A549 (cell line): ENCODE measurements at regions of chr15 and their contacts with region 1.

Region 1: DNA sequence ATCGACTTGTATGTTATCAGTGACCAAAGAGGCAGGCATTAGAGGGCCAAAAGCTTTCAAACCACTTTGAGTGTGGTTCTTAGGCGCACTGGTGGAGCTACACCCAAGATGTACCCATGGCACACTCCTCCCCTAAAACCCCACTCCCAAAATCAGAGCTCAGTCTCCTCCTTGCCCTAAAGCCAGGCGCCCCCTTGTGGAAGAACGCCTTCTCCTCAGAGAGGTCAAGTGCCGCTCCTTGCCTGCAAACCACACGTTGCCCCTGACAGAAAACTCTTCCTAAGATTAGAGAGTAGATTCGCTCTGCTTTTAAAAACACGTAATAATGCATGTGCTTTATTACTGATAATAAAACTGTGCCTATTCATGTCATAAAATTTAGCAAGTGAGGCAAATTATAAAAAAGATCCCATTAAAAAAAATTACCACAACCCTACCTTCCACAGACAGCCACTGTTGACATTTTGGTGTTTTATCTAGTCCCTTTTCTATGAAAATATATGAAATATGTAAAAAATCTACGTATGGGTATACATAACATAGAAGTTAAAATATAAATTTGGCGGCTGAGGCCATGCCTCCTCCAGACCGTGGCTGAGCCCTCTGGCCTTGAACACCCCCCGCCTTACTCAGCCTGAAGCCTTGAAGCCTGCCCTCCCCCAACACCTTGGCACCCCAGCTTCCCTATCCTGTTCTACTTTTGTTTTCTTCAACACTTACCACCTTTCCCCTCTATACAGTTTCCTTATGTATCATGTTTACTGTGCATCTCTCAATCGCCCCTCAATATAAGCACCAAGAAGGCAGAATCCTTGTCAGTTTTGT is 33.5 kb downstream of the BCL2L10 start:
- DNase-seq: peak; percentile 79 to 82
- ATAC-seq: peak; percentile 55 to 87; a peak in 4 of 6 replicates
- H3K4me3 ChIP-seq: no peak overlapping the region
- H3K27ac ChIP-seq: peak overlapping the region; percentile 69 to 82
- H3K4me1 ChIP-seq: peaks cover 34% of the 10 kb centered on the region
- CTCF ChIP-seq: peak; percentile 93
- EP300 ChIP-seq: no peak
- POLR2A ChIP-seq: no peak
- RAD21 ChIP-seq: peak; percentile 81 to 88

Region 2: DNA sequence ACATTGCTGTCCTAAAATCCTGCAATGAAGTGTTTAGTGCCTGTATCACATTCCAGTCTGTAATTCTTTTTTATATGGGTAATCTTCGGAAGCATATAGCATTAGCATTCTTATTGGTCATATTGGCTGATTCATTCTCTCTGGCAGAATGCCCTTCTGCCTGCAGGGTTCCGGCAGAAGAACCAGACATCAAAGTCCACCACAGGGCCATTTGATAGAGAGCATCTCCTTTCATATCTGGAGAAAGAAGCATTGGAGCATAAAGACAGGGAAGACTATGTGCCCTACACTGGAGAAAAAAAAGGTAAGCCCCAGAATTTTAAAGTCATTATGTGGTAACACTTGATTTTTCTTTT is 210.0 kb before region 1 on chr15:
- CTCF ChIA-PET with region 1: no interaction called
- POLR2A ChIA-PET with region 1: no interaction called
- DNase-seq: peak; percentile 70 to 95
- ATAC-seq: peak; percentile 78 to 87
- H3K4me3 ChIP-seq: peak overlapping the region; percentile 32
- H3K27ac ChIP-seq: peak overlapping the region; percentile 89
- H3K4me1 ChIP-seq: peaks cover 76% of the 10 kb centered on the region
- CTCF ChIP-seq: no peak
- EP300 ChIP-seq: peak; percentile 59 to 82; a peak in 3 of 5 replicates
- POLR2A ChIP-seq: no peak
- RAD21 ChIP-seq: peak in 1 of 2 experiments; percentile 25; a peak in 2 of 5 replicates

Region 3: GRCh38 chr15:51971375-51972133 is 107.5 kb before region 1 on chr15 and contains the start of gene LEO1:
- CTCF ChIA-PET with region 1: interaction called, 26 read pairs
- POLR2A ChIA-PET with region 1: interaction called, 6 read pairs
- DNase-seq: peak; percentile 99
- ATAC-seq: peak; percentile 94 to 98
- H3K4me3 ChIP-seq: peak within 1 kb of the TSS; percentile 68
- H3K27ac ChIP-seq: peak within 1 kb of the TSS; percentile 83 to 95
- H3K4me1 ChIP-seq: peaks cover 13% of the 10 kb centered on the region
- CTCF ChIP-seq: peak; percentile 51
- EP300 ChIP-seq: no peak
- POLR2A ChIP-seq: peak; percentile 93
- RAD21 ChIP-seq: peak in 1 of 2 experiments; percentile 32; a peak in 1 of 5 replicates
- polyA plus RNA-seq, gene LEO1: 19.2 and 22.3 TPM in 2 replicates

Region 4: DNA sequence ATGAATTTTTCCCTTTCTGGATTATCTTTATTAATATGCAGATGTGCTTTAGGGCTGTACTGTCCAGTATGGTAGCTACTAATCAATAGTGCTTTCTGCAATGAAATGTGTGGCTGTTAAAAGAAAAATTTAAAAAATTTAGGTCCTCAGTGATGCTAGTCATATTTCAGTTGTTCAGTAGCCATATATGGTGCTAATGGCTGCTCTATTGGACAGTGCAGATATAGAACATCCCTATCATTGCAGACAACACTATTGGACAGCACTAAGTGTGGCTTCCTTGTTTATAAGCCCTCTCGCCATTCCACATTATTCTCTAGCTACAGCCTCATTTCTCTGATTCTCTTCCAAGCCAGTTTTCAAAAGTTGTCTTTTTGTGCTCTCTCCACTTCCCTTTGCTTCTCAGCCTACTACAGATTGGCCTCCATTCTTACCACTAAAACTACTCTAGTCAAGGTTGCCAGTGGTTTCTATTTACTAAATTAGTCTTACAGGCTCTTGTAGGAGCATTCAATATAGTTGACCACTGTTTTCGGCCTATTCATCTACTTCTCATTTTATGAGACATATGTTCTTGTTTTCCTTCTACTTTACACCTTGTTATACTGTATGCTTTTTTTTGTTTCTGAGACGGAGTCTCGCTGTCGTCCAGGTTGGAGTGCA is 50.5 kb before region 1 on chr15:
- CTCF ChIA-PET with region 1: interaction called, 12 read pairs
- POLR2A ChIA-PET with region 1: no interaction called
- DNase-seq: no peak
- ATAC-seq: peak in 1 of 2 experiments; percentile 25; a peak in 2 of 6 replicates
- H3K4me3 ChIP-seq: no peak overlapping the region
- H3K27ac ChIP-seq: no peak overlapping the region
- H3K4me1 ChIP-seq: peaks cover 34% of the 10 kb centered on the region
- CTCF ChIP-seq: no peak
- EP300 ChIP-seq: no peak
- POLR2A ChIP-seq: no peak
- RAD21 ChIP-seq: no peak

Region 5: DNA sequence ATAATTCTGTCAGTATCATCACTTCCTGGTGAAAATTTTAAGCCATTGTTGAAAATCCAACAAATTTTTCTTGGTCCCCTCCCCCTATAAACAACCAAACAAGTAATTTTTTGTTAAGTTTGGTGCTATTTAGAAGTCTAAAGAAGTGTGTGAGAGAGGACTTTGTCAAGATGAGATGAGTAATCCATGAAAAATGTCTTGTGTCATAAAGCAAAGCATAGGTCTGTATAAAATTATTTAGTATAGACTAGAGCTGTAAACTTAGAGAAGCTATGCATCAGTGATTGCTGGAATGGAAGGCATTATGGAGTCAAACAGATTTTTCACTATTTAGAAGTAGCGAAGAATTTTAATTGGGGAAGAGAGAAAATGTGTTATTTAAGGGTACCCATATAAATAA is 28.7 kb before region 1 on chr15:
- CTCF ChIA-PET with region 1: interaction called, 17 read pairs
- POLR2A ChIA-PET with region 1: no interaction called
- DNase-seq: peak in 1 of 2 experiments; percentile 23
- ATAC-seq: peak; percentile 46 to 58; a peak in 3 of 6 replicates
- H3K4me3 ChIP-seq: no peak overlapping the region
- H3K27ac ChIP-seq: no peak overlapping the region
- H3K4me1 ChIP-seq: peaks cover 32% of the 10 kb centered on the region
- CTCF ChIP-seq: no peak
- EP300 ChIP-seq: no peak
- POLR2A ChIP-seq: no peak
- RAD21 ChIP-seq: no peak

Region 6: DNA sequence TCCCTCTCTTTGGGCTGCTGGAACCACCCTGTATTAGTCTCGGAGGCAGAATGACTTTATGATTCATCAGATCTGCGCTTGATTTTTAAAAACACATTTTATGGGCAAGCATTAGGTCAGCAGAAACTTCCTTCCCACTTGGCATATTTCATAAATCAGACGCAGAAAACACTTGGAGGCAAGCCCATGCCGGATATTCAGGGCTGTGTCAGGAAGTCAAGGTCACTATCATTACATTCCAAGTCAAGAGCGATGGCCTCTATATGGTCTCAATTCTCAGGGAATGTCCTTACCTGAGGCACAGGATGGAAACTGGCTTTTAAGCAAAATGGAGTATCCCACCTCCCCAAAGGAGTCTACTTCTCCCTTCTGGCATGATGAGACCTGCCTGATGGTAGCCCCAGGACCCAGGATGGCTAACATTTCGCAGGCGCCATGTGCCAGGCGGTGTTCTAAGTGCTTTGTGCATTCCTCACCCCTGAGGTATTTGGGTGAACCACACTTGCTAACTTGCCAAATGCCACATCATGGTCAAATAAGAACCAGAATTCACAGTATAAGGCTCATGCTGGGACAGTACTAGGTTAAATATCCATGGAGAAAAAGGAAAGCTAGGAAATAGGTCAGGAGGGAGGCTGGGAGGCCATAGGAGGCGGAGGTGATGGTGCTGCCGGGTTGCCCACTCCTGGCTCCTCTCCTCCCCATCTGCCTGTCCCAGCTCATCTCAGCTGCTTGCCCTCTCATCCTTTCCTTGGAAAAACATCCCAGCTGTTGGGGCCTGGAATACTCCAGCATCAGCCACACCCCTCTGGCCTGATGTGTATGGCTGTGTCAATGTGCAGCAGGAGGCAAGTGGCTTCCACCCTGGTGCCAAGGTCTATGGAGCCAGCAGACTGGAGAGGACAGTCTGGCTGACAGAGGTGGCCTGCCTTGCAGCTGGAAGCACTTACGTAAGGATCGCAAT is 14.7 kb after region 1 on chr15:
- CTCF ChIA-PET with region 1: interaction called, 39 read pairs
- POLR2A ChIA-PET with region 1: no interaction called
- DNase-seq: peak; percentile 46 to 86
- ATAC-seq: peak; percentile 81 to 84
- H3K4me3 ChIP-seq: no peak overlapping the region
- H3K27ac ChIP-seq: peak overlapping the region; percentile 83 to 91
- H3K4me1 ChIP-seq: peaks cover 43% of the 10 kb centered on the region
- CTCF ChIP-seq: no peak
- EP300 ChIP-seq: peak; percentile 63 to 79; a peak in 2 of 5 replicates
- POLR2A ChIP-seq: no peak
- RAD21 ChIP-seq: peak in 1 of 2 experiments; percentile 19; a peak in 3 of 5 replicates

Region 7: GRCh38 chr15:52139599-52140491 is 60.8 kb after region 1 on chr15:
- CTCF ChIA-PET with region 1: interaction called, 55 read pairs
- POLR2A ChIA-PET with region 1: no interaction called
- DNase-seq: peak; percentile 79 to 92
- ATAC-seq: peak; percentile 66 to 87
- H3K4me3 ChIP-seq: no peak overlapping the region
- H3K27ac ChIP-seq: peak overlapping the region; percentile 67 to 83
- H3K4me1 ChIP-seq: peaks cover 50% of the 10 kb centered on the region
- CTCF ChIP-seq: peak; percentile 97
- EP300 ChIP-seq: no peak
- POLR2A ChIP-seq: no peak
- RAD21 ChIP-seq: peak; percentile 91 to 92

Region 8: DNA sequence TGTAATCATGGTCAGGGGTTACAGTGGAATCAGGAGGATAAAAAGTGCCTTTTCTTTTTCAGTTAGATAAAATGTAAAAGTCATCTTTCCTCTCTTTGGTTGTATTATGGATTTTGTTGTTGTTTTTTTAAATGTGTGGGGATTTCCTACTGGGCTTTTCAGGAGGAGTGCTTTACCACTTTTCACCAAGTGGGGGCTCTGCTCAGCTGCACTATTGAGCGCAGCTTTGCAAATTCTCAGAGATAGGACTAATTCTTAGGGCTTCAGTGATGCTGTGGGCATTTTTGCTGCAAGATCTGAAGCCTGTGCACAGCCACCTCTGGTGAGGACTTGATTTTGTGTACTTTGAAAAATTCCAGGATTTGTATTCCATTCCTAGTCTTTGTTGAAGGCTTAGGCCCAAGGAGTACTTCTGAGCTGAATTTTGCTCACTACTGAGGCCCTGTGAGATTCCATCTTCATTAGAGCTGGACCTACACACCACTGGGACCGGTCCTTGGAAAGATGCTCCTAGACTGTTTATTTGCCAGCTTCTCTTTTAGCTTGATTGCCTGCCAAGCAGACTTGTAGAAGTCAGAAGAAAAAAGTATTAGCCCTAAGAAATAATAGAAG is 104.6 kb after region 1 on chr15:
- CTCF ChIA-PET with region 1: no interaction called
- POLR2A ChIA-PET with region 1: no interaction called
- DNase-seq: peak; percentile 43 to 47
- ATAC-seq: no peak
- H3K4me3 ChIP-seq: no peak overlapping the region
- H3K27ac ChIP-seq: no peak overlapping the region
- H3K4me1 ChIP-seq: peaks cover 7% of the 10 kb centered on the region
- CTCF ChIP-seq: peak; percentile 65
- EP300 ChIP-seq: no peak
- POLR2A ChIP-seq: no peak
- RAD21 ChIP-seq: peak; percentile 47 to 62; a peak in 4 of 5 replicates